Heart left ventricle (tissue), 16 donors: ENCODE measurements at regions of chr18 and their contacts with region 1.

Region 1: GRCh38 chr18:3062798-3063680 is 50.1 kb upstream of the LPIN2 start:
- DNase-seq: peak; percentile 61 to 83 (median 67)
- ATAC-seq: peak; percentile 59 to 71 (median 68)
- H3K4me3 ChIP-seq: peak overlapping the region in 1 of 12 donors; percentile 13
- H3K27ac ChIP-seq: peak overlapping the region in 1 of 12 donors; percentile 84
- H3K4me1 ChIP-seq: peaks cover 0 to 39% (median 13%) of the 10 kb centered on the region in 12 donors
- H3K27me3 ChIP-seq: no peaks in the 10 kb centered on the region
- CTCF ChIP-seq: peak; percentile 58 to 82 (median 72)
- POLR2A ChIP-seq: no peak

Region 2: GRCh38 chr18:2994603-2995432 is 68.2 kb before region 1 on chr18:
- intact Hi-C with region 1: loop called in 4 of 10 experiments (anchors 5 to 10 kb)
- DNase-seq: peak in 3 of 5 donors; percentile 43 to 61 (median 55)
- ATAC-seq: peak; percentile 60 to 81 (median 74)
- H3K4me3 ChIP-seq: peak overlapping the region in 1 of 12 donors; percentile 12
- H3K27ac ChIP-seq: peak overlapping the region in 4 of 12 donors; percentile 8 to 37 (median 26)
- H3K4me1 ChIP-seq: peaks cover 7 to 49% (median 27%) of the 10 kb centered on the region in 12 donors
- H3K27me3 ChIP-seq: no peaks in the 10 kb centered on the region
- CTCF ChIP-seq: peak in 11 of 12 donors; percentile 22 to 58 (median 38)
- POLR2A ChIP-seq: no peak

Region 3: GRCh38 chr18:3153107-3153704 is 90.2 kb after region 1 on chr18:
- intact Hi-C with region 1: no loop called
- DNase-seq: no peak
- ATAC-seq: no peak
- H3K4me3 ChIP-seq: no peak overlapping the region
- H3K27ac ChIP-seq: peak overlapping the region in 3 of 12 donors; percentile 3 to 33 (median 7)
- H3K4me1 ChIP-seq: peaks cover 5 to 47% (median 27%) of the 10 kb centered on the region in 12 donors
- H3K27me3 ChIP-seq: no peaks in the 10 kb centered on the region
- CTCF ChIP-seq: no peak
- POLR2A ChIP-seq: no peak